ENCODE measurements at regions of chr1 and their contacts with region 1.

Region 1: DNA sequence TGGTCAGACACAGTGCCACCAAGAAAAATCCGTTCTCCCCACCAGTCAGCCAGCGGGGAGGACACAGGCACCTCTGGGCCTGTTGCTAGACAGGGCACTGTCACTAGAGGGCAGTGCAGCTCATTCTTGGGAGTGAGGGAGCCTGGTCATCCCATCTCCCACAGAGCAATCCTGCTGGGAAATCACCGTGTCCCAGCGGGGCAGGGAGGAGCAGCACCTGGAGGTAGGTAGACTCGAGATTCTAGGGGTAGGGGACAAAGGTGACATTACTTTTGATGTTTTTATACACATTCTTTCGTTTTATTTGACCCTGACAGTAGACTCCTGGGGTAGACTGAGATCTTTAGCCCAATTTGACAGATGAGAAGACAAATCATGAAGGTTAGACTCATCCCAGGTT is 6.7 kb upstream of the CAMK1G start:
- DNase-seq: no peak
- H3K4me3 ChIP-seq: no peak overlapping the region
- H3K27ac ChIP-seq: no peak overlapping the region
- H3K4me1 ChIP-seq: peaks cover 0 to 4% (median 0%) of the 10 kb centered on the region in 4 donors
- H3K27me3 ChIP-seq: peaks cover 0 to 27% (median 2%) of the 10 kb centered on the region in 4 donors
- CTCF ChIP-seq: peak; percentile 84 to 98 (median 86)
- EP300 ChIP-seq: no peak
- POLR2A ChIP-seq: no peak

Region 2: DNA sequence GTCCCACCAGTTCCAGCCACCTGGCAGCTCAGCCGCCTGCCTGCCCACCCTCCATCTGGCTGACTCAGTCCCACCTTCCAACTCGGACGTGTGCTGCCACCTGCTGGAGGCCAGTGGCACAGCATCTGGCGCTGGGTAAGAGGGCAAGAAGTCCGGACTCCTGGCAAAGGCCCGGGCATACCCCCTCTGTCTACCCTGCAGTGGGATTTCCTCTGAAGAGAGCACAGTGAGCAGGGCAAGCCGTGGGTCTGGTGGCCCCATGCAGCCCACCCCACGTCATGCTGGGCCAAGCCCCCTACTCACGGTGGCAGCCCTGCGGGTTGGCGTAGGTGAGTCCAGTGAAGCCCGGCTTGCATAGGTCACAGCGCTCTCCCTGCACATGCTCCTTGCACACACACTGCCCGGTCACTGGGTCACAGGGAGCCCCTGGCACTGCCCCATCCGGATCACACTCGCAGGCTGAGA is 51.0 kb after region 1 on chr1:
- intact Hi-C with region 1: loop called (anchors 2 kb)
- DNase-seq: no peak
- H3K4me3 ChIP-seq: no peak overlapping the region
- H3K27ac ChIP-seq: no peak overlapping the region
- H3K4me1 ChIP-seq: peaks cover 39 to 46% (median 44%) of the 10 kb centered on the region in 4 donors
- H3K27me3 ChIP-seq: no peaks in the 10 kb centered on the region
- CTCF ChIP-seq: peak; percentile 89 to 99 (median 94)
- EP300 ChIP-seq: no peak
- POLR2A ChIP-seq: no peak

Region 3: GRCh38 chr1:209747580-209748262 is 170.9 kb after region 1 on chr1:
- intact Hi-C with region 1: loop called (anchors 2 kb)
- DNase-seq: peak; percentile 97
- H3K4me3 ChIP-seq: peak overlapping the region; percentile 32 to 56 (median 42)
- H3K27ac ChIP-seq: peak overlapping the region in 3 of 4 donors; percentile 26 to 55 (median 31)
- H3K4me1 ChIP-seq: peaks cover 16 to 20% (median 18%) of the 10 kb centered on the region in 4 donors
- H3K27me3 ChIP-seq: no peaks in the 10 kb centered on the region
- CTCF ChIP-seq: peak; percentile 80 to 92 (median 82)
- EP300 ChIP-seq: no peak
- POLR2A ChIP-seq: no peak

Measured in esophagus muscularis mucosa (tissue), 4 donors.